Activated naive CD8-positive, alpha-beta T cell treated with anti-CD3 and anti-CD28 coated beads, Interleukin-2, amount 10 ng/mL, durations not matched to agents 7 days and 5 days (primary cell): ENCODE measurements at regions of chr17 and their contacts with region 1.

Region 1: DNA sequence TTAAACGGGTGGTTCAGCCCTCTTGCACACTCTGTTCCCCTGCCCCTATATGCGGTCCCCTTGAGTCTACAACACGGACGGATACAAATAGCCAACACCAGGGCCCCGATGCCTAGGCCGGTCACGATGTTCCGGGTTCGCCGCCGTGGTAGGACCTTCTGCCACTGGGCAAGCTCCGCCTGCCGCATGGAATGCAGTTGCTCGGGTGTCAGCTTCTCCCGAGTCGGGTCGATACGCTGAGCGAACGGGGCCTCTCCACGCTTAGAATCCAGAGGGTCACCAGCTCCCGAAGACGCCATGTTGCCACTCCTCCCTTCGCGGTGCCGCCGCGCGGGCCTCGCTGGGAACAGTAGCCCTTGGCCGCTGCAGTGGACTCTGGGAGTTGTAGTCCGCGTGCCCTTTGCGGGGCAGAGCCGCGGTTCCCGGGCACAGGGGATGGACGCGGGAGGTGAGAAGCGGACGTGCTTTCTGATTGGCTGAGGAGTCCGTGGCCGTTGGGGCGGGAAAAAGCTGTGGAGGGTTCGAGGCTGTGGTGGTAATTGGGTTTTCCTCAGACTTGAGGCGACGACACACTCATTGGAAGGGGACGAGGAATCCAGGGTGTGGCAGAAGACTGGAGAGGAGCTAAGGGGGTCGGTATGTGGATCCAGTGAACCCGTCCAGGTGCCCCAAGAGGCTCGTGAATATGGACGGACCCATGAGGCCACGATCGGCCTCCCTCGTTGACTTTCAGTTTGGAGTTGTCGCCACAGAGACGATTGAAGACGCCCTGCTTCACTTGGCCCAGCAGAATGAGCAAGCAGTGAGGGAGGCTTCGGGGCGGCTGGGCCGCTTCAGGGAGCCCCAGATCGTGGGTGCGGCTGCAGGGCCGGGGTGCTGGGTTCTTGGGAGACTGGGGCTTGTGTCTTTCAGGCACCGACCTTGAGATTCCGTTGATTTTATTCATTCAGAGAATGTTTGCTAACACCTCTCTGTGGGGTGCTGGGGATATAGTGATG is at the starts of genes CNTD1 and COA3:
- DNase-seq: peak; percentile 85
- ATAC-seq: peak; percentile 98
- H3K4me3 Mint-ChIP-seq: peak within 1 kb of the TSS; percentile 88
- H3K27ac Mint-ChIP-seq: peak within 1 kb of the TSS; percentile 73
- H3K4me1 Mint-ChIP-seq: peaks cover 10% of the 10 kb centered on the region
- H3K27me3 Mint-ChIP-seq: no peaks in the 10 kb centered on the region
- total RNA-seq, gene CNTD1: 0.45 TPM in 1 of 2 experiments, not detected in the other
- total RNA-seq, gene COA3: 37.0 to 38.5 TPM

Region 2: DNA sequence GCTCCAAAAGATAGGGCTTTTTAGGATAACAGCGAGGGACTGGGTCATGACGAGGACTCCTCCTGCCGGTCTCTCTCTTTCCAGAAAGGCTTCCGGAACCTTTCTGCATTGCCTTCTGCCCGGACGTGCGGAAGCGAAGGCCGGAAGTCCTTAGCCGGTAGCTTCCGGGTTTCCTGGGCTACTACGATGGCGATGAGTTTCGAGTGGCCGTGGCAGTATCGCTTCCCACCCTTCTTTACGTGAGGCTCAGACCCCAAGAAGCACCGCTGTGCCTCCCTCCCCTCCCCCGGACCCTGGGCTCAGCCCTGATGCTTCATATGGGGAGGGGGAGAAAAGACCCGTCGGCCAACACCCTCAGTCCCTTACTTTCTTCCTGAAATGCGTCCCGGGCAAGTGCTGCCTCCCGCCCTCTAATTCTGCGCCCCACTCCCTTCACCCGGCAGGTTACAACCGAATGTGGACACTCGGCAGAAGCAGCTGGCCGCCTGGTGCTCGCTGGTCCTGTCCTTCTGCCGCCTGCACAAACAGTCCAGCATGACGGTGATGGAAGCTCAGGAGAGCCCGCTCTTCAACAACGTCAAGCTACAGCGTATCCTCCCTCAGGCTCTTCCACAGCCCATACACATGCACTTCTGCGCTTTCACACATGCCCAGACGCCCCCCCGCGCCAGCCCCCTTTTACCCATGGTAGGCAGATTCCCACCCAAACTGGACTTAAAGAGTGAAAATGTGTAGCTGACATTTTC is 25.2 kb before region 1 on chr17 and contains the start of gene VPS25:
- POLR2A ChIA-PET with region 1: interaction called, 19 read pairs
- DNase-seq: peak; percentile 74
- ATAC-seq: peak; percentile 87
- H3K4me3 Mint-ChIP-seq: peak within 1 kb of the TSS; percentile 100
- H3K27ac Mint-ChIP-seq: peak within 1 kb of the TSS; percentile 97
- H3K4me1 Mint-ChIP-seq: peaks cover 22% of the 10 kb centered on the region
- H3K27me3 Mint-ChIP-seq: peaks cover 2% of the 10 kb centered on the region
- total RNA-seq, gene VPS25: 61.0 to 63.5 TPM